ENCODE measurements at regions of chr16 and their contacts with region 1.

Region 1: DNA sequence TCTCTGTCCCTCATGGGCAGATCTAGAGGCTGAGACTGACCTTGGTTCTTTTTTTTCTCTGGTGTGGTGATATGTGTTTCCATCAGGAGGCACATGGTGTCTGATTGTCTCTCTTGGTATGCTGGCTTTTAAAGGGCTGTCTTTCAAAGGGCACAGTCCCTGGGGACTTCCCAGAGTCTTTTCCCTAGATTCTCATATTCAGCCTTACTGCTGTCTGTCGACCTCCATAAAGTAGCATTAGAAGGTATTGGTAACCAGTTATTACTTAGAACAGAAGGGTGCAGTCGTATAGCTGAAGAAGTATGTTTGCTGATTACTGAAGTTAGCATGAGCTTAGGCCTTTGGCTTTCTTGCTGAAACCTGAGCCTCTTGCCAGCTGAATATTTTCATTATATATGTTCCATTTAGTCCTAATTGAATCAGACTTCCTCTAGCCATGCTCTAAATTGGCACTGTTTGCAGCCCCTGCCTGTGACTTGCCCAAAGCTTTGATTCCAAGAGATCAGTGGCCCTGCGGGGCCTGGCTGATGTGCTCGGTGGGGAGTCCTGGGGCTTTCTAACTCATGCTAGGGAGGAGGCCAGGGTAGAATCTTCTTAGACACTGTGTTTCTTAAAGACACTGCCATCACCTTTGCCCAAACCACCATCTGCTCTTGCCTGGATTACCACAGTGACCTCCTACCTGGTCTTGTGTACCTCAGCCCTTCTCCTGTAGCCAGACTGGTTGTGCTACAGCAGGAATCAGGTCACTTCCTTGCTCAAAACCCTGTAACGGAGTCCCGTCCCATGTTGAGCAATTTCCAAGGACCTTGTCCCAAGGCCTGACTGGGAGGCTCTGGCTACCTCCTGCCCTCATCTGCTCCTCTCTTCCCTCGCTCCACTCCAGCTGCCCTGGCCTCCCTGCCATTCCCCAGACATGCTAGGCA is 71.5 kb downstream of the WWP2 start:
- DNase-seq: peak; percentile 51
- ATAC-seq: peak; percentile 72
- H3K4me3 ChIP-seq: no peak overlapping the region
- H3K27ac ChIP-seq: peak overlapping the region; percentile 48; the same call in 1 of the 2 replicates
- H3K4me1 ChIP-seq: peaks cover 20% of the 10 kb centered on the region
- H3K27me3 ChIP-seq: no peaks in the 10 kb centered on the region
- CTCF ChIP-seq: 0 out of 2 replicates have a peak, but pooled peaks have one; percentile 1
- POLR2A ChIP-seq: no peak
- RAD21 ChIP-seq: no peak

Region 2: GRCh38 chr16:69691980-69692911 is 141.4 kb before region 1 on chr16:
- CTCF ChIA-PET with region 1: no interaction called
- POLR2A ChIA-PET with region 1: no interaction called
- dilution Hi-C with region 1: no loop called
- in situ Hi-C with region 1: no loop called
- intact Hi-C with region 1: no loop called
- DNase-seq: peak; percentile 73
- ATAC-seq: peak; percentile 77
- H3K4me3 ChIP-seq: no peak overlapping the region
- H3K27ac ChIP-seq: no peak overlapping the region
- H3K4me1 ChIP-seq: 0 out of 2 replicates have a peak, but pooled peaks cover 2% of the 10 kb centered on the region
- H3K27me3 ChIP-seq: no peaks in the 10 kb centered on the region
- CTCF ChIP-seq: no peak
- POLR2A ChIP-seq: no peak
- RAD21 ChIP-seq: no peak

Region 3: DNA sequence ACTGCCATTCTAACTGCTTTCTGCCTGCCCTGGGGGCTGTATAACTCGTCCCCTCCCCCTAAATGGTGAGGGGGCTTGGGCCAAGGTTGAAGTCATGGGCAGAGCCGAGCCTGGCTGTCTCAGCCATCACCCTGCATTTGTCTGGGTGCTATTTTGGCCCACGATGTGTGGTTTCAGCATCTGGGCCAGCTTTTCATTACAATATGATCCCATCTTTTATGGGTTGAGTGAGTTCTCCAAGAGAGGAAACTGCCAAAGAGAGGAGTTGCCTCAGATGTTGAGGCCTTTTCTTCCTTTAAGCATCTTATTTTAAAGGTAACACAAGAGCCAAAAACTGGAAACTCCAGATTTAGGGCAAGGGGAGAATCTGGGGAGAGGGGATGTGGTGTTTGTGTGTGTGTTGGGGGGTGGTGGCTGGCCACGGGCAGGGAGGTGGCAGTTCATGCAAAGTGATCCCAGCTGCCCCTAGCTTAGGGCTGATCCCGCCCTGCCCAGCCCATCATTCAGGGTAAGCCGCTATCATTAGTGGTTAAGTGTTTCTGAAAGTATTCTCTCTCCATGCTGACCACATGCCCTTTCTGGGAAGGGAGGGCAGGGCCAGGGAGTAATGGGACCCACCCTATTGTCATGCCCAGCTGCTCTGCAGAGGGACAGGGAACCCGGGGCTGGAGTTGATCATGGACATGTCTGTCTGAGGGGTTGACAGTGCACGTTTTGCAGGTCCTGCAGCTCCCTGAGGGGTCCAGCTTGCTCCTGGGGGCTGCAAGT is 34.3 kb after region 1 on chr16:
- CTCF ChIA-PET with region 1: no interaction called
- POLR2A ChIA-PET with region 1: no interaction called
- dilution Hi-C with region 1: no loop called
- in situ Hi-C with region 1: no loop called
- intact Hi-C with region 1: no loop called
- DNase-seq: no peak
- ATAC-seq: no peak
- H3K4me3 ChIP-seq: no peak overlapping the region
- H3K27ac ChIP-seq: no peak overlapping the region
- H3K4me1 ChIP-seq: peaks cover 6% of the 10 kb centered on the region; the same call in 1 of the 2 replicates
- H3K27me3 ChIP-seq: no peaks in the 10 kb centered on the region
- CTCF ChIP-seq: no peak
- POLR2A ChIP-seq: no peak
- RAD21 ChIP-seq: no peak

Region 4: DNA sequence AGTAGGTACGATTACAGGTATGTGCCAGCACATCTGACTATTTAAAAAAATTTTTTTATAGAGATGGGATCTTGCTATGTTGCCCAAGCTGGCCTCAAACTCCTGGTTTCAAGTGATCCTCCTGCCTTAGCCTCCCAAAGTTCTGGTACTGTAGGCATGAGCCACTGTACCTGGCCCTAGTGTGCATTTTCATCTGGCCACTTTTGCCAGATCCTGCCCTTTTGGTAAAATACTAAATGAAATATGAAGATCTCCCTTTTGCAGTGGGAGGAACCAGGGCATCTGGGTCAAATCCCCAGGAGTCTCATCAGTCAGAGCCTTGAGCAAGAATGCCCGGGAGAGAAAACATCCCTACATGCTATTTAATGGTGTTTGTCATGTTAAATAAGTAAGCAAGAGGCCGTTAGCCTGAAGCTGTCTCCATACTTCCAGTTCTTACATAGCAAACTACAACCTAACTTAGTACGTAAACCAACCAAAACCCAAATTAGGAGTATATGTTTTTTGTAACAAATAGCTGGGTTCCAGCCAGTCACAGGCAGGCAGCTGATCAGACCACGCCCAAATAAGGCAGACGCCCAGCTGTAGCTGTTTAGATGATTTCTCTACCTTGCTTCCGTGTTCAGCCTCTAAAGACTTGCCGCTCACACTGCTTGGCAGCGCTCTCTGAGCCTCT is 71.0 kb after region 1 on chr16:
- CTCF ChIA-PET with region 1: no interaction called
- POLR2A ChIA-PET with region 1: no interaction called
- dilution Hi-C with region 1: no loop called
- in situ Hi-C with region 1: no loop called
- intact Hi-C with region 1: loop called (anchors 5 kb)
- DNase-seq: no peak
- ATAC-seq: no peak
- H3K4me3 ChIP-seq: no peak overlapping the region
- H3K27ac ChIP-seq: no peak overlapping the region
- H3K4me1 ChIP-seq: peaks cover 12% of the 10 kb centered on the region
- H3K27me3 ChIP-seq: no peaks in the 10 kb centered on the region
- CTCF ChIP-seq: no peak
- POLR2A ChIP-seq: no peak
- RAD21 ChIP-seq: no peak

Measured in IMR-90 (cell line).